ENCODE measurements at regions of chrX and their contacts with region 1.

Region 1: DNA sequence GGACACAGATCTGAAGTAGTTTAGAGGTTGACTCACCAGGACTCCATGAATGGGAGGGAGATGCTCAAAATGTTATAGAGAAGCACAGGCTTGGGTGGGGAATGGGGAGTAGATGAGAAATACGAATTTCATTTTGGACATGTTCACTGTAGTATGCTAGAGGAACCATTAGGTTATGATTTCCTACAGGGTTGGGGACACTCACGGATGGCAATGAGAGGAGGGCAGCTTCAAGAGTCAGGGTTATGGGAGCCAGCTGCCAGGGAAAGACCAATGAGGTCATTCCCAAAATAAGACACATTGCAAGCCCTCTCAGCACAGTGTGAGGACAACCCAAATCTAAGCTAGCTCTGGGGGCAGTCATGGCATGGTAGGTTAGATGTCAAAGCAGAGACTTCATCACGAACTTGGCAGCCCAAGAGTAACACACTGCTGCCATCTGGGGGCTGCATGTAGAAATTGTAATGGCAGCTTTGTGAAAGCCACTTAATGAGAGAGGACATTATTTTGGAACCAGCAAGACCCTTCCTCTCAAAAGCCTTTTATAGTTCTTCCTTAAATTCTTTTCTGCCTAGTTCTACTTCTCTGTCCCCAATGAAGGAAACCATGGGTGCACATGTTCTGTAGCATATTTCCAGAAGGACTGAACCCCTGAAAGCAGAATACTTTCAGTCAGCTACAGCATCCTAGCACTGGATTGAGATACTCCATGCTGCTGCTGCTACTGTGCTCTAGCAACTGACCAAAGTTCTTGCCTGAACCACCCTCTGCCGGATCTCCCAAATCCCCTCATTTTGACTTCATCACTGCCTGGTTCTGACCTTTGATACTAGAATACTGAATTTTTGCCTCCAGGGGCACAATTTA is 16.2 kb upstream of the ZCCHC12 start:
- DNase-seq: peak; percentile 24 to 60 (median 34)
- ATAC-seq: peak; percentile 81
- H3K4me3 ChIP-seq: no peak overlapping the region
- H3K27ac ChIP-seq: no peak overlapping the region
- H3K4me1 ChIP-seq: no peaks in the 10 kb centered on the region; a peak in 1 of 5 replicates
- H3K27me3 ChIP-seq: no peaks in the 10 kb centered on the region
- CTCF ChIP-seq: peak; percentile 72 to 82 (median 74)
- EP300 ChIP-seq: no peak
- POLR2A ChIP-seq: no peak
- RAD21 ChIP-seq: peak; percentile 83 to 91

Region 2: DNA sequence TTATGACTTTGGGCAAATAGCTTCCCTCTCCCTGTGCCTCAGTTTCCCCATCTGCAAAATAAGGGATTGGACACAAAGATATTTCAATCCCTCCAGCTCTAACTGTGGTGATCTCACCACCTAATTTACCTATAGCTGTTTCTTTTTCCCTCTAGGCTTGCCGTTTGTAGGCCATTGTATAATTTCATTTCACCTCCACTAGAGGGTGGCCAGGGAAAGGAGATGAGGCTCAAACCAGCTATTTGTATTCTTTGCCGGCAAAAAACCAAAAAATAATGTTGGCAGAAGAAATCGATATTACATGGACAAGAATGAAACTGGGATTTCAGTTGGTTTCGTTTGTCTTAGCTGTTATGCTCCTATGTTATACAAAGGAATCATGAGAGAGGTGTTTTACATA is 347.9 kb before region 1 on chrX:
- CTCF ChIA-PET with region 1: no interaction called
- POLR2A ChIA-PET with region 1: no interaction called
- in situ Hi-C with region 1: loop called (anchors 10 kb)
- intact Hi-C with region 1: loop called (anchors 1 kb)
- DNase-seq: peak; percentile 44 to 68 (median 52)
- ATAC-seq: peak; percentile 89
- H3K4me3 ChIP-seq: no peak overlapping the region
- H3K27ac ChIP-seq: no peak overlapping the region
- H3K4me1 ChIP-seq: peaks cover 0 to 2% of the 10 kb centered on the region in 2 experiments; a peak in 2 of 5 replicates
- H3K27me3 ChIP-seq: no peaks in the 10 kb centered on the region
- CTCF ChIP-seq: peak; percentile 63 to 81 (median 71)
- EP300 ChIP-seq: no peak
- POLR2A ChIP-seq: no peak
- RAD21 ChIP-seq: peak; percentile 76 to 90

Region 3: DNA sequence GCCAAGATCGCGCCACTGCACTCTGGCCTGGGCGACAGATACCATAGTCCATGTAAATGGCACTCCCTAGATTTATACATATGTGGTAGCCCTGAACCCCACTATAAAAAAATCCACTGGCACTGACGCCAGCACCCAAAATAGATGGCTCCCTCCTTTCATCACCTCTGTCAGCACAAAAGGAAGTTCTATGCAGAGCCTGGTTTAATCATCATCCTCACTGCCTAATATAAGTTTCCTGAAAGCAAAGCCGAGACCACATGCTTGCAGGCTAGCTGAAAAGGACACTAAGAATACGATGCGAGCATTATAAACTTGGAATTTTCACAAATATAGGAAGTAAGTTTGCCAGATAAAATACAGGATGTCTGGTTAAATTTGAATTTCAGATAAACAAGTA is 339.3 kb before region 1 on chrX:
- CTCF ChIA-PET with region 1: no interaction called
- POLR2A ChIA-PET with region 1: no interaction called
- in situ Hi-C with region 1: loop called (anchors 10 kb)
- intact Hi-C with region 1: no loop called
- DNase-seq: no peak
- ATAC-seq: no peak
- H3K4me3 ChIP-seq: no peak overlapping the region
- H3K27ac ChIP-seq: no peak overlapping the region
- H3K4me1 ChIP-seq: peaks cover 0 to 7% of the 10 kb centered on the region in 2 experiments; a peak in 2 of 5 replicates
- H3K27me3 ChIP-seq: no peaks in the 10 kb centered on the region
- CTCF ChIP-seq: no peak
- EP300 ChIP-seq: no peak
- POLR2A ChIP-seq: no peak
- RAD21 ChIP-seq: no peak

Region 4: GRCh38 chrX:118603981-118604380 is 203.4 kb before region 1 on chrX:
- CTCF ChIA-PET with region 1: interaction called, 6 read pairs
- POLR2A ChIA-PET with region 1: no interaction called
- in situ Hi-C with region 1: no loop called
- intact Hi-C with region 1: loop called (anchors 1 kb)
- DNase-seq: peak; percentile 50 to 70 (median 52)
- ATAC-seq: peak; percentile 90
- H3K4me3 ChIP-seq: no peak overlapping the region
- H3K27ac ChIP-seq: no peak overlapping the region
- H3K4me1 ChIP-seq: no peaks in the 10 kb centered on the region; a peak in 1 of 5 replicates
- H3K27me3 ChIP-seq: no peaks in the 10 kb centered on the region
- CTCF ChIP-seq: peak; percentile 62 to 83 (median 81)
- EP300 ChIP-seq: no peak
- POLR2A ChIP-seq: no peak
- RAD21 ChIP-seq: peak; percentile 37 to 68; a peak in 2 of 4 replicates

Region 5: DNA sequence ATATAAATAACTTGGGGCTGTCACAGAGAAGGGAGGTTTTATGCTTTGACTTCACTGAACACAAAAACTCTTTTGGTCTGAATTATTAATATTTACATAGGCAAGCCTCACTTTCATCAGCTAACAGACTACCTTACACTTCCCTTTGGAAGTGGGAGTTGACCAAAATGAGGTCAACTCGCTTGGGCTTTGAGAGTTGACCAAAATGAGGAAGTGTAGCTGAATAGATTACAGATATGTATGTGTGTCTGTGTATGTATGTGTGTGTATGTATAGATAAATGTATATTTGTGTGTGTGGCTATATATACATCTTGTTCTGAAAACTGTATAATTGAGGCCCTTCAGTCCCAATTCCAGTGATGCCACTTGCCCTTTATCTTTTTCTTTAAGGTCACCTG is 193.2 kb before region 1 on chrX:
- CTCF ChIA-PET with region 1: no interaction called
- POLR2A ChIA-PET with region 1: no interaction called
- in situ Hi-C with region 1: loop called (anchors 5 kb)
- intact Hi-C with region 1: no loop called
- DNase-seq: peak in 1 of 4 experiments; percentile 29
- ATAC-seq: peak; percentile 86
- H3K4me3 ChIP-seq: no peak overlapping the region
- H3K27ac ChIP-seq: peak overlapping the region; percentile 67; the same call in 2 of the 3 replicates
- H3K4me1 ChIP-seq: peaks cover 0 to 11% of the 10 kb centered on the region in 2 experiments; a peak in 2 of 5 replicates
- H3K27me3 ChIP-seq: no peaks in the 10 kb centered on the region
- CTCF ChIP-seq: no peak
- EP300 ChIP-seq: no peak
- POLR2A ChIP-seq: no peak
- RAD21 ChIP-seq: no peak

Region 6: DNA sequence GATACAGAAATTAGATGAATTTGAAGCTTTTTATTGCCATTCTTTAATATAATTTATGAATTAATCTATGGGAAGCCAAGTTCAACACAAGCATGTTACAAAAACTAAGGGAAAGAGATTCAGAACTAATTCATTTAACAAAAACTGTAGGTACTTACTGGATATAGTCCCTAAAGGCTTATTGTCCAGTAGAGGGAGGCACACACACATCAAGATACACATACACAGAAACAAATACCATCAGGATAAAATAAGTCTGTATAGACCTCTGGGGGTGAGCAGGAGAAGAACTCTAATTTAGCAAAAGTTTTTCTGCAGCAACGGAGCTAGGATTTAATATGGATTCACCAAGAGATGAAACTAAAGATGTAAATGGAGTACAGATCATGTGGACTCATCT is 163.0 kb before region 1 on chrX:
- CTCF ChIA-PET with region 1: interaction called, 18 read pairs
- POLR2A ChIA-PET with region 1: no interaction called
- in situ Hi-C with region 1: no loop called
- intact Hi-C with region 1: loop called (anchors 1 kb)
- DNase-seq: peak; percentile 8 to 16 (median 10)
- ATAC-seq: peak; percentile 79
- H3K4me3 ChIP-seq: no peak overlapping the region
- H3K27ac ChIP-seq: no peak overlapping the region
- H3K4me1 ChIP-seq: no peaks in the 10 kb centered on the region
- H3K27me3 ChIP-seq: no peaks in the 10 kb centered on the region
- CTCF ChIP-seq: peak in 2 of 3 experiments; percentile 27 to 39; a peak in 3 of 6 replicates
- EP300 ChIP-seq: no peak
- POLR2A ChIP-seq: no peak
- RAD21 ChIP-seq: peak in 1 of 2 experiments; percentile 46; a peak in 2 of 4 replicates

Region 7: GRCh38 chrX:118761939-118762707 is 45.3 kb before region 1 on chrX:
- CTCF ChIA-PET with region 1: no interaction called
- POLR2A ChIA-PET with region 1: no interaction called
- in situ Hi-C with region 1: no loop called
- intact Hi-C with region 1: loop called (anchors 1 kb)
- DNase-seq: peak in 2 of 4 experiments; percentile 8
- ATAC-seq: peak; percentile 59; the same call in 2 of the 3 replicates
- H3K4me3 ChIP-seq: no peak overlapping the region
- H3K27ac ChIP-seq: no peak overlapping the region
- H3K4me1 ChIP-seq: no peaks in the 10 kb centered on the region
- H3K27me3 ChIP-seq: no peaks in the 10 kb centered on the region
- CTCF ChIP-seq: peak; percentile 16 to 51 (median 18); a peak in 3 of 6 replicates
- EP300 ChIP-seq: no peak
- POLR2A ChIP-seq: no peak
- RAD21 ChIP-seq: peak; percentile 38 to 40; a peak in 3 of 4 replicates

Measured in K562 (cell line).